ENCODE measurements at regions of chr16 and their contacts with region 1.

Region 1: DNA sequence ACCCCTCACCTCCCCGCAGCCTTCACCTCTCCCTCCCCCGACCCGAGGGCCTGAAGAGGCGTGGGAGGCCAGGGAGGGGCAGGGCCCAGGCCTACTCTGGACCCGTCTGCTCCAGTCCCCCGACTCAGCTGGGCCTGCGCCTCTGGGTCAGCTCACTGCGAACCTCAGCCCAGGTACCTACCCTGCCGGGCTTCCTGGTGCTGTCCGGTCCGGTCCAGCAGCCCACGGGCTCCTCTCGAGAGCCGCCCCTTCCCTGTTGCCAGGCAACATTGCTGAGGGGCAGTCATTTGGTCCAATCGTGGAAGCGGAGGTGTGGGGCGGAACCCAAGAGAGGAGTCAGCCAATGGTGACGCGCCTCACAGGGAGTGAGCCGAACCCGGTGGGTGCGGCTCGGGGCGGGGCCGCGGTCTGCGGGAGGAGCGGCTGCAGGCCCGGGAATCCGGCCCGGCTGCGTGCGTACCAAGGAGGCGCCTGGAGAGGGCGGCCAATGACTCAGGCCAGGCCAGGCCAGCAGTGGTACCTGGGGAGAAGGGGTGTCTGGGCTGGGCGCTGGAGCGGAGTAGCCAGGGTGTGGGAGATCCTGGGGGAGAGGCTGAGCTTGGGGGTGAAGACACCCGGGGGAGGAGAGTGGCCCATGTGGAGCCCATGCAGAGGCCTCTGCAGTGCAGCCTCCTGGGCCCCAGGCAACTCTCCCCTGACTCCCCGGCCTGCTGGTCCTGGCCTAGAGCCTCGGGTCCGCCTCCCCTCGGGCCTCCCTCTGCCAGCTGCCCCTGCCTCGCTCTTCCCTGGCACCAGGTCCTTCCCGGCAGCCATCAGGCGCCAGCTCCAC is at the start of gene MEAK7:
- DNase-seq: peak; percentile 93 to 99 (median 96)
- ATAC-seq: peak; percentile 99
- H3K4me3 ChIP-seq: peak within 1 kb of the TSS; percentile 97
- H3K4me3 Mint-ChIP-seq: peak within 1 kb of the TSS; percentile 79 to 94 (median 89)
- H3K27ac ChIP-seq: peak within 1 kb of the TSS; percentile 80
- H3K27ac Mint-ChIP-seq: peak within 1 kb of the TSS; percentile 52 to 88 (median 81)
- H3K4me1 ChIP-seq: peaks cover 23 to 49% of the 10 kb centered on the region in 2 donors
- H3K4me1 Mint-ChIP-seq: peaks cover 31 to 59% (median 55%) of the 10 kb centered on the region in 7 donors
- H3K27me3 ChIP-seq: no peaks in the 10 kb centered on the region
- H3K27me3 Mint-ChIP-seq: no peaks in the 10 kb centered on the region
- total RNA-seq, gene MEAK7: 6.3 to 56.1 (median 9.3) TPM

Region 2: DNA sequence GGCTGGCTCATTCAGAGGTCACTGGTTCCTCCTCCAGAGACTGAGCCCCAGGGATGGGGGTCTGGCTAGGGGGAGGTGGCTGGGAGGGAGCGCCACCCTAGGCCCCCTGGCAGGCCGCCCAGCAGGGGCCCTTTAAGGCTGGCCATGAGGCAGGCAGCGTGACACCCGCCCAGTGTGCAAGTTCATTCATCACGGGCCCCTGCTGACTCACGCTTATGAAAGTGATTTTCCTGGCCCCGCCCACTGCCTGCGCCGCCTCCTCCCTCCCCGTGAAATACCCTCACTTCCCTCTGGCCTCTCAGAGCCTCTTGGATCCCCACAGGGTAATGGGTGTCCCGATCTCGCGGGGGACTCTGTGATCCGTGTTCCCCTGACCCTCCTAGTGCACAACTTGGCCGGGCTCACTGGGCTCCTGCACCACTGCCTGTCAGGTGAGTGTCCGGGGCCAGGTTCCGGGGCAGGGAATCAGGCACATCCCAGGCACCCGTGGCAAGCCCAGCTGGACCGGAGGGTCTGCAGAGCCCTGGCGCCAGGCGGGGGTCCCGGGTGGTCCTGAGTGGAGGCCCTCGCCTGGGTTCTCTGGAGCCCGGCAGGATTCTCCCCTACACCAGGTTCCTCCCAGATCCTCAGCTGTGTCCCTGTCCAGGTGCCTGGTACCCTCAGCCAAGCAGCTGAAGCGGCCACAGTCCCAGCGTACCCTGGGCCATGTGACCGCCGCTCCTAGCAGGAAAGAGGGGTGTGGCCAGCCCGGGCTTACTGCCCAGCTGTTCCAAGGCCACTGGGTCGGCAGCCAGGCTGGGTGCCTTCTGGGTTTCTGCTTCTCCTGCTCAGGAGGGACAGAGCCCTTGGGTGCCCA is 551.5 kb before region 1 on chr16 and contains the start of gene OSGIN1:
- CTCF ChIA-PET with region 1: no interaction called
- POLR2A ChIA-PET with region 1: no interaction called
- intact Hi-C with region 1: loop called in 1 of 2 experiments (anchors 2 kb)
- DNase-seq: peak in 4 of 9 donors; percentile 14 to 81 (median 28)
- ATAC-seq: peak; percentile 84
- H3K4me3 ChIP-seq: no peak within 1 kb of the TSS
- H3K4me3 Mint-ChIP-seq: peak within 1 kb of the TSS in 9 of 10 donors; percentile 48 to 86 (median 66)
- H3K27ac ChIP-seq: no peak within 1 kb of the TSS
- H3K27ac Mint-ChIP-seq: peak within 1 kb of the TSS in 1 of 9 donors; percentile 63
- H3K4me1 ChIP-seq: peaks cover 0 to 14% of the 10 kb centered on the region in 2 donors
- H3K4me1 Mint-ChIP-seq: peaks cover 0 to 12% (median 9%) of the 10 kb centered on the region in 7 donors
- H3K27me3 ChIP-seq: peaks cover 0 to 6% of the 10 kb centered on the region in 2 donors
- H3K27me3 Mint-ChIP-seq: peaks cover 7 to 36% (median 17%) of the 10 kb centered on the region in 5 donors
- total RNA-seq, gene OSGIN1: 0.34 to 8.4 (median 1.3) TPM

Region 3: GRCh38 chr16:84186685-84187437 is 317.8 kb before region 1 on chr16 and contains the start of gene TAF1C:
- CTCF ChIA-PET with region 1: no interaction called
- POLR2A ChIA-PET with region 1: no interaction called
- intact Hi-C with region 1: loop called (anchors 10 kb)
- DNase-seq: peak; percentile 81 to 94 (median 87)
- ATAC-seq: peak; percentile 99
- H3K4me3 ChIP-seq: peak within 1 kb of the TSS; percentile 91
- H3K4me3 Mint-ChIP-seq: peak within 1 kb of the TSS; percentile 89 to 94 (median 92)
- H3K27ac ChIP-seq: peak within 1 kb of the TSS; percentile 80
- H3K27ac Mint-ChIP-seq: peak within 1 kb of the TSS; percentile 78 to 95 (median 91)
- H3K4me1 ChIP-seq: peaks cover 0 to 6% of the 10 kb centered on the region in 2 donors
- H3K4me1 Mint-ChIP-seq: peaks cover 22 to 29% (median 25%) of the 10 kb centered on the region in 7 donors
- H3K27me3 ChIP-seq: no peaks in the 10 kb centered on the region
- H3K27me3 Mint-ChIP-seq: no peaks in the 10 kb centered on the region
- total RNA-seq, gene TAF1C: 62.6 to 127 (median 85.4) TPM

Region 4: DNA sequence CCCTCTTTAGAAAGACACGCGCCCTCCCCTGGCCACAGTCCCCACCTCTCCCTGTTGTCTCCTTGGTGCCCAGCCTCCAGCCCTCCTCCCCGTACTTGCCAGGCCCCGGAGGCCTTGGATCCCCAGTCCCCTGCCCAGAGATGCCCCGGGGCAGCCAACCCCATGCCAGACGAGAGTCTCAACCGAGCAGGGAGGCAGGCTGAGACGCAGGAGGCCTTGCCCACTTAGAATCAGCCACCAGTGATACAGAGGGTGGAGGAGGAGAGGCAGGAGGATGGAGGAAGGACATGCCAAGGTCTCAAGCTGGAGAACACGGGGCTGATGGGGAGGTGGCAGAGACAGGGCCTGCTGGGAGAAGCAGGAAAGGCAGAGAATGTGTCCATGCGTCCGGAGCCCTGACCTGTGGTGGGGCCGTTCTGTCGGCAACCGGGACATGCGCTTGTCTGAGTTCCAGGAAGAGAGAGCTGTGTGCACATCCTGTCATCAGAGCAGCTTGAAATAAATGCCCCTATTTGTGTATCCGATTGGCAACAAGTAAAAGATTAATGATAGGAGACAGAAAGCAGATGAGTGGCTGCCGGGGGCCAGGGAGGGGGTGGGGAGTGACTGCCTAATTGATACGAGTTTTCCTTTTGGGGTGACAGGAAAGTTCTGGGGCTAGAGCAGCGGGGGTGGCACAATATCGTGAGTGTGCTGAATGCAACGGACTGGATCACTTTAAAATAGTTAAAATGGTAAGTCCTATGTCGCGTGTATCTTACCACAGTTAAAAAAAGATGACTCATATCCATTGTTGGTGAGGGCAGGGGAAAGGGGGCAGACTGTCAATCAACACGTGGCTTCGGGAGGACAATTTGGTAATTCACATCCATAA is 44.6 kb after region 1 on chr16:
- CTCF ChIA-PET with region 1: interaction called, 8 read pairs
- POLR2A ChIA-PET with region 1: interaction called, 12 read pairs
- intact Hi-C with region 1: no loop called
- DNase-seq: peak in 8 of 9 donors; percentile 42 to 64 (median 60)
- ATAC-seq: peak; percentile 69
- H3K4me3 ChIP-seq: peak overlapping the region; percentile 65
- H3K4me3 Mint-ChIP-seq: peak overlapping the region; percentile 81 to 95 (median 90)
- H3K27ac ChIP-seq: peak overlapping the region; percentile 75
- H3K27ac Mint-ChIP-seq: peak overlapping the region; percentile 91 to 100 (median 96)
- H3K4me1 ChIP-seq: peaks cover 41 to 45% of the 10 kb centered on the region in 2 donors
- H3K4me1 Mint-ChIP-seq: peaks cover 38 to 70% (median 67%) of the 10 kb centered on the region in 7 donors
- H3K27me3 ChIP-seq: no peaks in the 10 kb centered on the region
- H3K27me3 Mint-ChIP-seq: no peaks in the 10 kb centered on the region

Region 5: GRCh38 chr16:84625556-84625955 is 120.9 kb after region 1 on chr16:
- CTCF ChIA-PET with region 1: interaction called, 129 read pairs
- POLR2A ChIA-PET with region 1: interaction called, 17 read pairs
- intact Hi-C with region 1: no loop called
- DNase-seq: no peak
- ATAC-seq: no peak
- H3K4me3 ChIP-seq: no peak overlapping the region
- H3K4me3 Mint-ChIP-seq: no peak overlapping the region
- H3K27ac ChIP-seq: no peak overlapping the region
- H3K27ac Mint-ChIP-seq: no peak overlapping the region
- H3K4me1 ChIP-seq: peaks cover 0 to 8% of the 10 kb centered on the region in 2 donors
- H3K4me1 Mint-ChIP-seq: peaks cover 6 to 33% (median 23%) of the 10 kb centered on the region in 7 donors
- H3K27me3 ChIP-seq: no peaks in the 10 kb centered on the region
- H3K27me3 Mint-ChIP-seq: peaks cover 0 to 44% (median 0%) of the 10 kb centered on the region in 5 donors

Region 6: DNA sequence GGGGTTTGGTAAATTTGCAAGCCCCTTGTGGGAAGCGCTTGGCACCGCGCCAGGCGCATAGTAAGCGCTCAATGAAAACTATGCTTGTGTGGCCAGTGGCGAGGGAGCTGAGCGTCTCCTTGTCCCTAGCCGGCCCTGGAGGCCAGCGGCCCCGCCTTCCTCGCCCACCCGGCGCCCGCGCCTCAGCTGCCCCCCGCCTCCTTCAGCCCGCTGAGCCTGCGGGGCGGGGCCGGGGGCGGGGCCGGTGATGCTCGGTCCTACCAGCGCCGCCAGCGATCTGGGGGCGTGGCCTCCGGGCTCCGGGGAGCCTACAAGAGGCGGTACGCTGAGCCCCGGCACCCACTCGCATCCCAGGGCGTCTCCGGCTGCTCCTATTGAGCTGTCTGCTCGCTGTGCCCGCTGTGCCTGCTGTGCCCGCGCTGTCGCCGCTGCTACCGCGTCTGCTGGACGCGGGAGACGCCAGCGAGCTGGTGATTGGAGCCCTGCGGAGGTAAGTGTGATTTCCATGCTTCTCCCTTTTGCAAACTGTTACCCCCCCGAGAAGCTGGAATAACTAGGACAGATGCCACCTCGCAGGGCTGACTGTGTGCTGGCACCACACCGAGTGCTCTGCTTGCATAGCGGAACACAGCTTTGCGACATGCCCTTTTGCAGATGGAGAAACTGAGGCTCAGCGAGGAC is 315.1 kb after region 1 on chr16 and contains the start of gene CRISPLD2:
- CTCF ChIA-PET with region 1: no interaction called
- POLR2A ChIA-PET with region 1: no interaction called
- intact Hi-C with region 1: loop called in 1 of 2 experiments (anchors 5 kb)
- DNase-seq: peak; percentile 85 to 92 (median 90)
- ATAC-seq: peak; percentile 100
- H3K4me3 ChIP-seq: peak within 1 kb of the TSS; percentile 55
- H3K4me3 Mint-ChIP-seq: peak within 1 kb of the TSS; percentile 75 to 87 (median 82)
- H3K27ac ChIP-seq: no peak within 1 kb of the TSS
- H3K27ac Mint-ChIP-seq: peak within 1 kb of the TSS in 4 of 9 donors; percentile 14 to 62 (median 34)
- H3K4me1 ChIP-seq: peaks cover 9 to 20% of the 10 kb centered on the region in 2 donors
- H3K4me1 Mint-ChIP-seq: peaks cover 11 to 31% (median 19%) of the 10 kb centered on the region in 7 donors
- H3K27me3 ChIP-seq: peaks cover 3 to 5% of the 10 kb centered on the region in 2 donors
- H3K27me3 Mint-ChIP-seq: peaks cover 0 to 54% (median 18%) of the 10 kb centered on the region in 5 donors
- total RNA-seq, gene CRISPLD2: 0.38 to 14.4 (median 0.49) TPM